AG04449 (cell line): ENCODE measurements at regions of chr18 and their contacts with region 1.

Region 1: DNA sequence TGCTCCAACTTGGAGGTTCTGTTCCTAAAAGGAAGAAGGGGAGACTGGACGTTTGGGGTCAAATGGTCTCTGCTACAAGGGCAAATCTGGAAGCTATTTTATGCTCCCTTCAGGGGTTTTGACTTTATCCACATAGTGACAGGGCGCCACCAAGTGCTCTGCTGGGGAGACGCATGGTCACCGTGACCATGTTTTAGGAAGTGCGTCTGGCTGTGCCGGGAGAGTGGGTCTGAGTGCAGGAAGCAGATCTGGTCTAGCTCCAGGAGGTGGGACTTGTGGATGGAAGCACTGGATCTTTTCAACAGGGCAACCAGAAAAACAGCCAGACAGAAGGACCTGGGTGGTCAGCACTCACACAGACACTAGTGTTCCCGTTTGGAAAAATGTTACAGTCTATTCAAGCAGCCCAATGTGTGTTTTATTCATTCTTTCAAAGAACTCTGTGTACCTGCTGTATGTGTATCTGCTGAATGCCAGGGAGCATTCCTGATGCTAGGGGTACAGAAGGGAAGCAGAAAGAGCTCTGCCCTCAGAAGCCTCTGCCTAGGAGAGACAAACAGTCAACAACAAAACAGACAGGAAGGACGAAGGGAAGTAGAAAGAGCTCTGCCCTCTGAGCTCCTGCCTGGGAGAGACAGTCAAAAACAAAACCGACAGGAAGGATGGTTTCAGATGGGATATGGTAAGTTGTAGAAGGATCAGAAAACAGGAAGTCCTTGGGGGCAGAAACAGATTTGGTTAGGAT is 14.3 kb downstream of the IMPA2 start:
- DNase-seq: no peak
- H3K4me3 ChIP-seq: no peak overlapping the region
- CTCF ChIP-seq: peak; percentile 86

Region 2: GRCh38 chr18:11654736-11655605 is 340.6 kb before region 1 on chr18:
- CTCF ChIA-PET with region 1: interaction called, 30 read pairs
- POLR2A ChIA-PET with region 1: no interaction called
- DNase-seq: no peak
- H3K4me3 ChIP-seq: no peak overlapping the region
- CTCF ChIP-seq: peak; percentile 80

Region 3: DNA sequence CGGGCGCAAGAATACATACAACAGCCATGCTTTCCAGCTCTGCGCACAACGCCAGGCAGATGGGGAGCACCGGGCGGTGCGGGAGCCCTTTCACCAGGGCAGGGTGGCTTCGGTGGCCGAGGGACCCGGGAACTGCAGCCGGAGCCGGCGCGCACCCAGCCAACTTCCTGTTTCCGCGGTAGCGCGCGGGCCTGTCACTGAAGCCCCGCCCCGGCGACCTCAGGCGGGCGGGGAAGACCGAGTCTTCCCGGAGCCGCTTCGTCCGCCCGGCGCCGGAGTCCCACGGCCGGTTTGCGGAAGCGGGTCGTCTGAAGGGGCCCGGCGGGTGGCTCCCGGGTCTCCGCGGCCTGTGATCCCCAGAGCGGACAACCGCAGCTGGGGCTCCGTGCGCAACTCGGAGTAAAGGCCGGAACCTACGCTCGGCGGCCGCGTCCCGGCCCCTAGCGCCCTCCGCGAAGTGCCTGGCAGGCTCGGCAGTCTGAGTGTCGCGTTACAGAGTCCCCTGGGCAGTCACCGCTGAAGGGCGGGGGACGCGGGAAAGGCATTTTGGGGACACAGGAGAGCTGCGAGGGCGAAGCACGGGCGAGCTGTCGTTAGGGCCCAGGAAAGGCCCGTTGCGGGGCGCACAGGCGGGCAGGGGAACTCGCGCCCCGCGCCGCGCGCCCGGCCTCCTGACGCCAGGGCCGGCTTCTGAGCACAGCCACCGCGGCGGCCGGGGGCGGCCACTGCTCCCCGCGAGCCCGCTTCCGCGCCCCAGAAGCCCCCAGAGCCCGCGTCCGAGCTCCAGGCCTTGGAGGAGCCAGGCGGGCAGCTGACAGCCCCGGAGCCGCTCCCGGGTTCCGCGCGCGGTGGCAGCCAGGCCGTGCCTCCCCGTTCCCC is 87.2 kb before region 1 on chr18 and contains the start of gene MPPE1:
- CTCF ChIA-PET with region 1: interaction called, 10 read pairs
- POLR2A ChIA-PET with region 1: no interaction called
- DNase-seq: peak; percentile 31
- H3K4me3 ChIP-seq: peak within 1 kb of the TSS; percentile 84
- CTCF ChIP-seq: no peak

Region 4: GRCh38 chr18:11932393-11932792 is 63.2 kb before region 1 on chr18:
- CTCF ChIA-PET with region 1: interaction called, 809 read pairs
- POLR2A ChIA-PET with region 1: no interaction called
- DNase-seq: no peak
- H3K4me3 ChIP-seq: no peak overlapping the region
- CTCF ChIP-seq: no peak

Region 5: DNA sequence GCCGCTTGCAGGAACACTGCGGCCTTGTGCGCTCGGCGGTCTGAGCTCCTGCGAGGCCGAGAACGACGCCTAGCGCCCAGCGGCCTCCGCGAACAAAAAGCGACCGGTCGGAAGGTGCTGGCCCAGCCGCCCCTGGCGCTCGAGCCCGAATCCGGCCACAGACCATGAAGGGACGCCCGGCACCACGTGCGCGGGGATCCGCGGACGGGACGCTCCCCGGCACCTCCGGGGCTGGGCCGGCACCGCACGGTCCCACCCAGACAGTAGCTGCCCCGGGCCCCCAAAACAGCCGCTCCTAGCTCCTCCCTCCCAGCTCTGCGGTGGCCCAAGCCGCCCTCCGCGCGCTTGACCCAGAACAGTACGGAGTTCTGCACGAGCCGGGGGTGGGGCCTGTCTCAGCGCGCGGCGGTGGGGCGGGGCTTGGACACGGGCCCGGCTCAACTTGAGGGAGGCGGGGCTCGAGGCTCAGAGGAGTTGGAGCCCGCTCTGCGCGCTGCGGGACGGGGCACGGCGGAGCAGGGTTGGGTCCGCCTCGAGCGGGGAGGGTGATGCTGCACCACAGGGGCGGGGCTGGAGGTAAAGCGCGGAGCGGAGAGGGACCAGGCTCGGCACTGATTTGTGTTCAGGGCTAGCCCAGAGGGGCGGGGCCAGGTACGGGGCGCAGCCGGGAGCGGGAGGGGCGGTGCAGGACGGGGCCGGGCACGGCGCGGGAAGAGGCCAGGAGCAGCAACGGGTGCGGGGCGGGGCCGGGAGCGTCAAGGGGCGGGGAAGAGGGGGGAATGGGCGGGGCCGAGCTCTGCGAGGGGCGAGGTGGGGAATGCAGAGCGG is 14.8 kb before region 1 on chr18:
- CTCF ChIA-PET with region 1: interaction called, 39 read pairs
- POLR2A ChIA-PET with region 1: interaction called, 3 read pairs
- DNase-seq: peak; percentile 70
- H3K4me3 ChIP-seq: peak overlapping the region; percentile 69
- CTCF ChIP-seq: peak; percentile 15

Region 6: DNA sequence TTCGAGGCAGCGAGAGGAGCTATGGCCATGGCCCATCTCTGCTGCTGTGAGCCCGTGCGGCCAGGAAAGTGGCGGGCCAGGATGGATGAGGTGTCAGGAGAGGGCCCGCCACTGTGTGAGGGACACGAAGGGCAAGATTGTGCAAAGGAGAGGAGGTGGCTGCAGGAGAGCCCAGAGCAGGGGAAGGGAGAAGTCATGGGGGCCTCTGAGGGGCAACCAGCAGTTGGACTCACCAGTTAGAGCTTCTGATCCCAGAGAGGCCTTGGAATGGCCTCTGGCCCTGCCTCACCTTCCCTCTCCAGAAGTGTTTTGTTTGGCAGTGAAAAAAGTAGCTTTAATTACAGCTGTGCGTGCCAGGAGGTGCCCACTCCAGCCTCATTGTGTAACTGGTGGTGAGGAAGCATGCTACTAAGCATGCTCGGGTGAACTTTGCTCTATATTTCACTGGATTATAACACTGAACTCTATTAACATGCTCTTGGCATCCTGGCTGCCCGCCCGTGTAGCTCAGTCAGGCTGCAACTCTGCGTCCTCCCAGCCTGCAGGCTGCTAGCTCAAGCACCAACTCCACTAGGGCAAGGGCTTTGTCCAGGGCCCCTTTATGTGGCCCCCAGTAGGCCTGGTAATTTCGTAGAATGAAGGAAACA is 19.9 kb after region 1 on chr18:
- CTCF ChIA-PET with region 1: interaction called, 22 read pairs
- POLR2A ChIA-PET with region 1: interaction called, 3 read pairs
- DNase-seq: no peak
- H3K4me3 ChIP-seq: no peak overlapping the region
- CTCF ChIP-seq: no peak